IMR-90 (cell line): ENCODE measurements at regions of chr12 and their contacts with region 1.

Region 1: DNA sequence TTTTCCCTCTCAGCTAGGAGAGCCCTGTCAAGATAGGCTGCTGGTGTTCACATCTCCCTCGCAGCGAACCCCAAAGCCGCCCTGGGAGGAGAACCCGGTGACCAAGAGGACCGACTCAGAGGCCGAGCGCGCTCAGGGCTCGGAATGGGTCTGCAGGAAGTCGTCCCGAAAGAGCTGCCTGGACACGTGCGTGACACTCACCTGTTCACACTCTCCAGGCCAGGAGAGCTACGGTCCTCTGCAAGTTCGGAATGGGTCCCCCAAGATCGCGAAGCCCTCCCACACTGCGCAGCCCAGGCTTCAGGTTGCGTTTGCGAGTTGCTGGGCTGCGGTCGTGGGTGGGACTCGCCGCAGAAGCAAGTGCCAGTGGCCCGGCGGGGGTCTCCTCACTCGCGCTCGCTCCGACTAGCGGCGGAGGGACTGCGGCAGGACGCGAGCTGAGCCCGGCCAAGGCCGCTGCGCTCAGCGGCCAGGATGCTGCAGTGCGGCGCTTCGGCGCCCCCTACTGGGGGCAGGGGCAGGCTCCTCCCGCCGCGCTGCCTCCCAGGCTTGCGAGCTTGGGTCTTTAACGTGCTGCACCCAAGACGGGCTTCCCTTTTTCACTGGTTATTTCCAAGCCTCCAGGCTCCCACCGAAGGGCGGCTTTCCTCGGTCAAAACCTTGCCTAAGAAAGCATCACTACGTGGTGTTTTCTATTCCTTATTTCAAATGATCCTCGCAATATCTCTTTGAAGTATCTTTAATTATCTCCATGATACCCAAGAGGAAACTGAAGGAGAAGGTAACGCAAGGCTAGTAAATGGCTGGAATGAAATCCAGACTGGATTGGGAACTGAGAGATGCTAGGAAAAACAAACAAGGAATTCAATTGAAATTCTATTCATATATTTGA is at the start of gene RERG:
- DNase-seq: peak; percentile 63
- ATAC-seq: peak; percentile 100
- H3K4me3 ChIP-seq: peak within 1 kb of the TSS; percentile 31
- H3K27ac ChIP-seq: no peak within 1 kb of the TSS
- H3K4me1 ChIP-seq: no peaks in the 10 kb centered on the region
- H3K27me3 ChIP-seq: peaks cover 7% of the 10 kb centered on the region
- CTCF ChIP-seq: peak; percentile 90
- POLR2A ChIP-seq: no peak
- RAD21 ChIP-seq: peak; percentile 84
- total RNA-seq, gene RERG: not detected in 2 replicates

Region 2: DNA sequence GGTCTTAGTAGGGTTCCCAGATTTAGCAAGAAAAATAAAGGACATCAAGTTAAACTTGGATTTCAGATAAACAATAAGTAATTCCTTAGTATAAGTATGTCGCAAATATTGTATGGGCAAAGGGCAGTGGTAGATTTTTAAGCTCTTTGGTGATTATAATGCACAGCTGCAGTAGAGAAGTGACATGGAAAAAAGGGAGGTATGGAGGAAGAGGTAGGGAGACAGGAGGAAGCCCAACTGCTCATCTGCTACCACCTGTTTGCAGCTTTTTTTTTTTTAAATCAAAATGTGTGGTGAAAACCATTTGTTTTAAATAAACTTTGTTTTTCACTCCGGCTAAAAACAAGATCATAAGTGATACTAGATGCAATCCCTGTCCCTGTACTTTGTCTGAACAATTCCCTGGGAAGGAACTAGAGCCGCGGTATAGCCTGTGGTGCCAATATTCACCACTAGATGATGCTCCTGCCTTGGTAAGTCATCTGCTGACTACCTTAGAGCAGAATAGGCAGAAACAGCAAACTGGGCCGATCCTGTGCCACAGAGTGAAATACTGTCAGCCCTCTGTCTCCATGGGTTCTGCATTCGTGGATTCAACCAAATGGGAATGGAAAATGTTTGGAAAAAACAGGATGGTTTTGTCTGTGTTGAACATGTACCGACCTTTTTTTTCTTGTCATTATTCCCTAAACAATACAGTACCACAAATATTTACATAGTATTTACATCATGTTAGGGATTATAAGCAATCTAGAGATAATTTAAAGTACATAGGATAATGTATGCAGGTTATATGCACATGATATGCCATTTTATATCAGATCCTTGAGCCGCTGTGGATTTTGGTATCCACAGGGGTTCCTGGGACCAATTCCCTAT is 591.2 kb before region 1 on chr12:
- CTCF ChIA-PET with region 1: interaction called, 3 read pairs
- POLR2A ChIA-PET with region 1: no interaction called
- dilution Hi-C with region 1: no loop called
- in situ Hi-C with region 1: no loop called
- intact Hi-C with region 1: loop called (anchors 5 kb)
- DNase-seq: peak; percentile 62
- ATAC-seq: peak; percentile 100
- H3K4me3 ChIP-seq: no peak overlapping the region
- H3K27ac ChIP-seq: no peak overlapping the region
- H3K4me1 ChIP-seq: no peaks in the 10 kb centered on the region
- H3K27me3 ChIP-seq: no peaks in the 10 kb centered on the region
- CTCF ChIP-seq: peak; percentile 92
- POLR2A ChIP-seq: no peak
- RAD21 ChIP-seq: peak; percentile 88

Region 3: GRCh38 chr12:14723763-14724162 is 497.5 kb before region 1 on chr12:
- CTCF ChIA-PET with region 1: no interaction called
- POLR2A ChIA-PET with region 1: no interaction called
- dilution Hi-C with region 1: no loop called
- in situ Hi-C with region 1: no loop called
- intact Hi-C with region 1: loop called (anchors 1 kb)
- DNase-seq: peak; percentile 58
- ATAC-seq: peak; percentile 80
- H3K4me3 ChIP-seq: no peak overlapping the region
- H3K27ac ChIP-seq: no peak overlapping the region
- H3K4me1 ChIP-seq: no peaks in the 10 kb centered on the region
- H3K27me3 ChIP-seq: no peaks in the 10 kb centered on the region
- CTCF ChIP-seq: peak; percentile 74
- POLR2A ChIP-seq: no peak
- RAD21 ChIP-seq: peak; percentile 78

Region 4: GRCh38 chr12:14845350-14845750 is 375.9 kb before region 1 on chr12:
- CTCF ChIA-PET with region 1: interaction called, 3 read pairs
- POLR2A ChIA-PET with region 1: no interaction called
- dilution Hi-C with region 1: no loop called
- in situ Hi-C with region 1: no loop called
- intact Hi-C with region 1: loop called (anchors 1 kb)
- DNase-seq: peak; percentile 65
- ATAC-seq: peak; percentile 77
- H3K4me3 ChIP-seq: no peak overlapping the region
- H3K27ac ChIP-seq: no peak overlapping the region; the same call in 1 of the 2 replicates
- H3K4me1 ChIP-seq: peaks cover 3% of the 10 kb centered on the region; the same call in 1 of the 2 replicates
- H3K27me3 ChIP-seq: no peaks in the 10 kb centered on the region
- CTCF ChIP-seq: peak; percentile 85
- POLR2A ChIP-seq: no peak
- RAD21 ChIP-seq: peak; percentile 81

Region 5: DNA sequence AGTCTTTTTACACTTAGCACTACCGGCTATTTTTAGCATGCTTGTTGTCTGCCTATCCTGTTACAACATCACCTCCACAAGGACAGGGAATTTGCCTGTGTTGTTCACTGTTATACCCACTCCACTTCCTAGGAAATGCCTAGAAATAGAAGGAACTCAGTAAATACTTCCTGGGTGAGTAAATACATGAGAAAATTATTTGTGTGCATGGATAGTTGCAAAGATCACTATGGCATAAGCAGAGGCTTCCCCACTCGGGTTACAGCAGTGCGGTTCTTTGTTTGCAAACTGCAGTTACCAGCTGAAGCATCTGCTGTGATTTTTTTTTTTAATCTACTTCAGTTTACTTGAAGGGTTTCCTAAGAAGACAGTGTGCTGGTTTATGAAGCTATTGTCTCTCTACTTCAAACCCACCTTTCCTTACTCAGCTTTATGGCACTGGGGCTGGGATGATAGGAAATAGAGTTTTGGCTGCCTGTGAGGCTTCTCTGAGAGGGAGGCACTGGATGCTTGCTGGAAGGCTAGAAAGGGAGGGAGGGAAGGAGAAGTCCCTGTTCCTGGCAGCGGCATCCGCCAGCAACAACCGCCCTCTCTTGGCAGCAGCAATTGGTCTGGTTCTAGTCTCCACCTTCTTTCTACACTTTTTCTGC is 219.4 kb before region 1 on chr12:
- CTCF ChIA-PET with region 1: interaction called, 4 read pairs
- POLR2A ChIA-PET with region 1: no interaction called
- dilution Hi-C with region 1: no loop called
- in situ Hi-C with region 1: no loop called
- intact Hi-C with region 1: loop called (anchors 2 kb)
- DNase-seq: peak; percentile 21
- ATAC-seq: peak; percentile 79
- H3K4me3 ChIP-seq: no peak overlapping the region
- H3K27ac ChIP-seq: no peak overlapping the region
- H3K4me1 ChIP-seq: no peaks in the 10 kb centered on the region
- H3K27me3 ChIP-seq: peaks cover 14% of the 10 kb centered on the region
- CTCF ChIP-seq: no peak
- POLR2A ChIP-seq: no peak
- RAD21 ChIP-seq: no peak

Region 6: GRCh38 chr12:15151161-15152120 is 69.8 kb before region 1 on chr12:
- CTCF ChIA-PET with region 1: interaction called, 8 read pairs
- POLR2A ChIA-PET with region 1: no interaction called
- dilution Hi-C with region 1: no loop called
- in situ Hi-C with region 1: no loop called
- intact Hi-C with region 1: loop called (anchors 1 kb)
- DNase-seq: no peak
- ATAC-seq: no peak
- H3K4me3 ChIP-seq: no peak overlapping the region
- H3K27ac ChIP-seq: no peak overlapping the region
- H3K4me1 ChIP-seq: no peaks in the 10 kb centered on the region
- H3K27me3 ChIP-seq: no peaks in the 10 kb centered on the region; the same call in 1 of the 2 replicates
- CTCF ChIP-seq: peak; percentile 31
- POLR2A ChIP-seq: no peak
- RAD21 ChIP-seq: no peak

Region 7: DNA sequence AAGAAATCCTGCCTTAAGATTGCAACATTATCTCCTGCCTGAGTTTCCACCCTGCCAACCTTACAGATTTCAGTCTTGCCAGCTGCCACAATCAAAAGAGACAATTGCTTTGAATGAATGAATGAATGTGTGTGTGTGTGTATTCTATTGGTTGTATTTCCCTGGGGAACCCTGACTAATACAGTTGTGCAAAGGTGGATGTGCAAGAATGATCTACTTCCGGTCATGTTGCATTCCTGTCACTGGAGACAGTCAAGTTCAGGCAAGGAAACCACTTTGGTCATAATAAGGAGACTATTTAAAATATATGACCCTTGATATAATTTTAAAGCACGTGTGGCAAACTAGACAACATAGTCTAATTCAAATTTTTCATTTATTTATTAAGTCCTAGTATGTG is 13.1 kb before region 1 on chr12:
- CTCF ChIA-PET with region 1: interaction called, 11 read pairs
- POLR2A ChIA-PET with region 1: no interaction called
- dilution Hi-C with region 1: no loop called
- in situ Hi-C with region 1: no loop called
- intact Hi-C with region 1: no loop called
- DNase-seq: no peak
- ATAC-seq: no peak
- H3K4me3 ChIP-seq: no peak overlapping the region
- H3K27ac ChIP-seq: no peak overlapping the region
- H3K4me1 ChIP-seq: no peaks in the 10 kb centered on the region
- H3K27me3 ChIP-seq: no peaks in the 10 kb centered on the region
- CTCF ChIP-seq: peak; percentile 26; the same call in 1 of the 2 replicates
- POLR2A ChIP-seq: no peak
- RAD21 ChIP-seq: no peak